Calu3 (cell line): ENCODE measurements at regions of chr10 and their contacts with region 1.

Region 1: DNA sequence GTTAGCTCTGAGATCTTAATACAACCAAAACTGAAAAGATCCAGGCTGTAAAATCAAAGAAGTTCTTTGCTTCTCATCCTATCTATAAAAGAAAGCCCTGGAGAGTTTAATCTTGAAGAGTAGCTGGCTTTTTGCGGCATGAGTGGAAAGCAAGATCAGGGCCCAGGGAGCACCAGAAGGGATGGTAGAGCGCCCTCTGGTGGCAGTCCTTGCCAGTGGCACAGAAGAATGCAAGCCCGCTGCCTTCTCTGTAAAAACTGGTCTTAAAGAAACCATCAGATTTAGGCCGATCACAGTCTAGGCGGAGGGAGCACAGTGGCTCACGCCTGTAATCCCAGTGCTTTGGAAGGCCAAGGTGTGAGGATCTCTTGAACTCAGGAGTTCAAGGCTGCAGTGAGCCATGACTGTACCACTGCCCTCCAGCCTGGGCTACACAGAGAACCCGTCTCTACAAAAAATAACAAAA is 35.6 kb downstream of the CPN1 start:
- DNase-seq: peak; percentile 82
- H3K4me3 Mint-ChIP-seq: no peak overlapping the region
- H3K27ac Mint-ChIP-seq: no peak overlapping the region
- H3K4me1 Mint-ChIP-seq: peaks cover 8% of the 10 kb centered on the region
- H3K27me3 Mint-ChIP-seq: no peaks in the 10 kb centered on the region
- CTCF ChIP-seq: peak; percentile 80

Region 2: GRCh38 chr10:99573790-99574189 is 472.3 kb before region 1 on chr10:
- CTCF ChIA-PET with region 1: no interaction called
- intact Hi-C with region 1: no loop called
- DNase-seq: no peak
- H3K4me3 Mint-ChIP-seq: no peak overlapping the region
- H3K27ac Mint-ChIP-seq: no peak overlapping the region
- H3K4me1 Mint-ChIP-seq: no peaks in the 10 kb centered on the region
- H3K27me3 Mint-ChIP-seq: peaks cover 34% of the 10 kb centered on the region
- CTCF ChIP-seq: no peak

Region 3: DNA sequence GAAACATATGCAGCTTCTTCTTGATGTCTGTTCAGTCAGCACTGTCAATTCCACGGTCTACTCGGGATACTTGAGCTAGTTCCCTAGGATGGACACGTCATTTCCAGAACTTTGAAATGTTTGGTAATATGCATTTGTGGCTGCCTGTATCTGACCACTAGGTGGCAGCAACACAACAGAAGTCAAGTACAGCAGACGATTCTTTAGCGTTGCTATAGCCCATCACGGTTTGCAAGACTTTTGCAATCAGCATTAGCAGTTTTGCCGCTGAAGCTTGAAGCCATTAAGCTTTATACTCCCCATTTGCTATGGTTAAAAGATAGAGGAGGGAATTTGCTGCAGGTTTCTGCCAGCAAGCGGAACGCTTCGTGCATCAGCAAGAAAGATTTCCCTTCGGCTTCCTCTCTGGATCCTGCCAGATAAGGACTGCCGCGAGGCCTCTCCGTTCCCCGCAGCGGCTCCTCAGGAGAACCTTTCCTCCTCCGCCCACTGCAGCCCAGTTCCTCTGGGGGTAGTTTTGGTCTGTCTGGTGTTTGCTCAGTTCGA is 200.1 kb before region 1 on chr10:
- CTCF ChIA-PET with region 1: interaction called, 12 read pairs
- intact Hi-C with region 1: loop called (anchors 1 kb)
- DNase-seq: peak; percentile 53
- H3K4me3 Mint-ChIP-seq: no peak overlapping the region
- H3K27ac Mint-ChIP-seq: no peak overlapping the region
- H3K4me1 Mint-ChIP-seq: no peaks in the 10 kb centered on the region
- H3K27me3 Mint-ChIP-seq: no peaks in the 10 kb centered on the region
- CTCF ChIP-seq: peak; percentile 71

Region 4: GRCh38 chr10:99906470-99906869 is 139.6 kb before region 1 on chr10:
- CTCF ChIA-PET with region 1: interaction called, 13 read pairs
- intact Hi-C with region 1: loop called (anchors 1 kb)
- DNase-seq: peak; percentile 67
- H3K4me3 Mint-ChIP-seq: no peak overlapping the region
- H3K27ac Mint-ChIP-seq: peak overlapping the region; percentile 64
- H3K4me1 Mint-ChIP-seq: peaks cover 26% of the 10 kb centered on the region
- H3K27me3 Mint-ChIP-seq: no peaks in the 10 kb centered on the region
- CTCF ChIP-seq: no peak

Region 5: GRCh38 chr10:99917963-99918825 is 127.9 kb before region 1 on chr10:
- CTCF ChIA-PET with region 1: no interaction called
- intact Hi-C with region 1: no loop called
- DNase-seq: no peak
- H3K4me3 Mint-ChIP-seq: peak overlapping the region; percentile 44
- H3K27ac Mint-ChIP-seq: peak overlapping the region; percentile 60
- H3K4me1 Mint-ChIP-seq: peaks cover 40% of the 10 kb centered on the region
- H3K27me3 Mint-ChIP-seq: no peaks in the 10 kb centered on the region
- CTCF ChIP-seq: no peak

Region 6: GRCh38 chr10:99976886-99977665 is 69.0 kb before region 1 on chr10:
- CTCF ChIA-PET with region 1: no interaction called
- intact Hi-C with region 1: loop called (anchors 10 kb)
- DNase-seq: peak; percentile 4
- H3K4me3 Mint-ChIP-seq: no peak overlapping the region
- H3K27ac Mint-ChIP-seq: no peak overlapping the region
- H3K4me1 Mint-ChIP-seq: peaks cover 26% of the 10 kb centered on the region
- H3K27me3 Mint-ChIP-seq: no peaks in the 10 kb centered on the region
- CTCF ChIP-seq: no peak

Region 7: DNA sequence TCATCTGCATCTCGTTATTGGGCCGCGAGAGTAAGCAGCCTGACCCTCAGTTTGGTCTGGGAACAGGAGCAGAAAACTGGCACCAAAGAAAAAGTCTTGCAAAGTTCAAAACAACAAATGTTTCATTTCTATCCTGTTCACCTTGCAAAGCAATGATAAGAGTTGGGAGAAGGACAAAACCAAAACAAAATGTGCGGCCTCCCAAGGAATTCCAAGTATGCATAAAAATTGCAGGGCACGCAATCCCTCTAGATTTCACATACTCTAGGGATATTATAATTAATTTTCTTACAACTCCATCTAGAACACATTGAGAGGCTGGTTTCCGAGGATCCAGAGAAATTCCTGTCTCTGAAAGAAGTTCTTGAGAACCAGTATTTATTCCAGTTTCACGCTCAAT is 163.2 kb after region 1 on chr10:
- CTCF ChIA-PET with region 1: no interaction called
- intact Hi-C with region 1: no loop called
- DNase-seq: no peak
- H3K4me3 Mint-ChIP-seq: no peak overlapping the region
- H3K27ac Mint-ChIP-seq: no peak overlapping the region
- H3K4me1 Mint-ChIP-seq: no peaks in the 10 kb centered on the region
- H3K27me3 Mint-ChIP-seq: no peaks in the 10 kb centered on the region
- CTCF ChIP-seq: no peak